Pancreas (tissue), 10 donors: ENCODE measurements at regions of chr6 and their contacts with region 1.

Region 1: GRCh38 chr6:100093405-100093804 is 99.4 kb upstream of the MCHR2 start:
- DNase-seq: peak in 1 of 6 donors; percentile 29
- ATAC-seq: no peak
- H3K4me3 ChIP-seq: no peak overlapping the region
- H3K27ac ChIP-seq: no peak overlapping the region
- H3K4me1 ChIP-seq: no peaks in the 10 kb centered on the region
- H3K27me3 ChIP-seq: no peaks in the 10 kb centered on the region
- CTCF ChIP-seq: no peak

Region 2: GRCh38 chr6:99871641-99872040 is 221.8 kb before region 1 on chr6:
- intact Hi-C with region 1: loop called in 2 of 3 experiments (anchors 5 to 10 kb)
- DNase-seq: no peak
- ATAC-seq: no peak
- H3K4me3 ChIP-seq: no peak overlapping the region
- H3K27ac ChIP-seq: no peak overlapping the region
- H3K4me1 ChIP-seq: no peaks in the 10 kb centered on the region
- H3K27me3 ChIP-seq: peaks cover 0 to 4% (median 0%) of the 10 kb centered on the region in 4 donors
- CTCF ChIP-seq: no peak

Region 3: DNA sequence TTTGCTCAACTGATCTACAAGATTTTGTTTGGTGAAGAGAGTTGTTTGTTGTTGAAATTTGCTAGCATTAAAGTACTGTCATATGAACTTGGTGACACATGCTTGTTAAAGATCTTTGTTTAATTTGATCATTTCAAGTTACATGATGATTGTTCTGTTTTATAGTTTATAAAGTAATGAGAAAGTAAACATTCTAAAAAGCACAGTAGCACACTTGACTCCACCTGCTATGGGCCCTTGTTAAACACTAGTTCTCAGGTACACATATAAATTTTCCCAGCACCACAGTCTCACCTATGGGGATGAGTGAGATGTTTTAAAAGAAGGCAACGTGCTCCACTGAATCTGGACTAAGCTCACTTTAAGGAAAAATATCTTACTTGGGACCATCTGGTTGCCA is 113.5 kb before region 1 on chr6:
- intact Hi-C with region 1: no loop called
- DNase-seq: no peak
- ATAC-seq: no peak
- H3K4me3 ChIP-seq: no peak overlapping the region
- H3K27ac ChIP-seq: no peak overlapping the region
- H3K4me1 ChIP-seq: no peaks in the 10 kb centered on the region
- H3K27me3 ChIP-seq: no peaks in the 10 kb centered on the region
- CTCF ChIP-seq: no peak

Region 4: DNA sequence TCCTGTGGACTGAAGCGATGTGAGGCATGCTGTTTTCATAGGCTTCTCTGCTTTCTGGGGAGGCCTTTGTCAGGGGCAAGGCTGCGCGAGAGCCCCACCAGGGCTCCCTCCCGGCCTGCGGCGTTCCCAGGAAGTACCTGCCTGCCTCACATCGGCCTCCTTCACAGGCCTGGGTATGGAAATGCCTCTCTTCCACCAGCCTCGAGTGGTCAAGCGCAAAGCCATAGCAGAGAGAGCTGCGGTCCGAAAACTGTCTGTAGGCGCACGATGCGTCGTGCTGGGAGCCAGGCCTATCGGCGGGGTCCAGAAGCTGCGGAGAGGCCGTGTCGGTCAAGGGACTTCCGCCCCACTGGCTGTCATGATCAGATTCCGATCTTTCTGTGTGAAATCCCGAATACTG is 300.1 kb after region 1 on chr6:
- intact Hi-C with region 1: no loop called
- DNase-seq: peak in 1 of 6 donors; percentile 32
- ATAC-seq: no peak
- H3K4me3 ChIP-seq: no peak overlapping the region
- H3K27ac ChIP-seq: no peak overlapping the region
- H3K4me1 ChIP-seq: no peaks in the 10 kb centered on the region
- H3K27me3 ChIP-seq: no peaks in the 10 kb centered on the region
- CTCF ChIP-seq: no peak